GM18951 (cell line): ENCODE measurements at regions of chr12 and their contacts with region 1.

Region 1: GRCh38 chr12:12334367-12335040 is 15.5 kb downstream of the MANSC1 start:
- POLR2A ChIP-seq: no peak

Region 2: DNA sequence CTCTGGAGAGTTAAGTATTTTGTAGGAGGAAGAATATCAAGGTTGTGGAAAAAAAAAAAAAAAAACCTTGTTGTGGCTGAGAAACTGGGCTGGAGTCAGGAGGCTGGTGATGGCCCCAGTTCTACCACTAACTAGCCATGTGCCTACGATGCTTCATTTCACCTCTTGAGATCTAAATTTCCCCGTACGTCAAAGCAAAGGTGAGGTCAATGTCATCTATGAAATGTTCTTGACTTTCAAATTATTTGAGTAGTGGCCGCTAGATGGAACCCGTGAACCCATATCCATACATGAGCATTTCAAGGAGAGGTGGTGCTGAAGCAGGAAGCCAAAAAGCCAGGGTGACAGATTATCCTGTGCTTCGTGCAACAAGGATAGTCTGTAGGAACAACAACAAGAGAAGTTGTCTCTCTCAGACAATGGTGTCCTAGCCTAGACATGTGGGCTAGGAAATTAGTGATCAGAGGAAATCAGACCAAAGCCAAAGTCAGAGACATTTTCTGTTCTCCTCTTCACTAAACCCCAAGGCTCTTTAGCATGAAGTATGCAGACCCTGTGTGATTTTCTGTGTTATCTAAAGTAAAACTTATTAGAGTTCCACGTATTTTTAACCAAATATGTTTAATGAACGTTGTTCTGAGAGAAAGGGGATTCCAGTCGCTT is 780.5 kb before region 1 on chr12:
- in situ Hi-C with region 1: loop called (anchors 25 kb)
- POLR2A ChIP-seq: no peak